Head of caudate nucleus (tissue), 42 donors: ENCODE measurements at regions of chr22 and their contacts with region 1.

Region 1: GRCh38 chr22:43014869-43015676 is at the start of gene PACSIN2:
- DNase-seq: peak; percentile 98 to 100 (median 100)

Region 2: DNA sequence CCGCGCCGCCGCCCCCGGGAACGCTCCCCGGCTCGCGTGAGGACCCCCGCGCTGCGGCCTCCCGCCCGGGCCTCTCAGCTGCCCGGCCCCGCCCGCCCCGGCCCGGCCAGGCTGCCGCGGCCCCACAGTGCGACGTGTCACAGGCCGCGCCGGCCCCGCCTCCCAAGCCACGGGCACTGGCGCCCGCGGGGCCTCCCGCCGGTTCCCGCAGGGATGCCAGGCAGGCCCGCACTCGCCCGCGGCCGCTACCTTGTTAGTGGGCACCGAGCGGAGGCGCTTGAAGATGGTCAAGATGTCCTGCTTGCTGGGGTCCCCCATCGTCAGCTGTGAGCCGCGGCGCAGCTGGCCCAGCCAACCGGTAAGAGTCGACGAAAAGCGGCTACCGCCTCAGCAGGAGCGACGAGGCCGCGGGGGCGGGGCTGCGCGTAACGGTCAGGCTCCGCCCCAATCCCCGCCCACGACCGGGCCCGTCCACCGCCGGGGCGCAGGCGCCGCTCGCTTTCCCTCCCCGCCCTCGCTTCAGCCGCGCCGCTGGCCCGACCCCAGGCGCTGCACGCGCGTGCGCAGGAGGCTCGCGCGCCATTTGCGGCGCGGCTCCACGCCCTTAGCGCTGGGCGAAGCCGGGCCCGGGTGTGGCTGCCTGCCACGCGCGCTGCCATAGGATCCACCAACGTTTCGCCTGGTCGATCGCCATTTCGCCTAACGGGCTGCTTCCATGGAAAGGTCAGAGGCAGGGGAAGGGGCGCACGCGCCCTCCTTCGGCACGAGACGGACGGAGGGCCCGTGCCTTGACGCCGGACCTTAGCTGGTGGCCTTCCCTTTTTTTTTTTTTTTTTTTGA is 158.0 kb before region 1 on chr22 and contains the start of gene ARFGAP3:
- intact Hi-C with region 1: loop called (anchors 2 kb)
- DNase-seq: peak; percentile 77 to 98 (median 95)

Region 3: GRCh38 chr22:43053176-43053575 is 38.1 kb after region 1 on chr22:
- intact Hi-C with region 1: no loop called
- DNase-seq: no peak

Region 4: DNA sequence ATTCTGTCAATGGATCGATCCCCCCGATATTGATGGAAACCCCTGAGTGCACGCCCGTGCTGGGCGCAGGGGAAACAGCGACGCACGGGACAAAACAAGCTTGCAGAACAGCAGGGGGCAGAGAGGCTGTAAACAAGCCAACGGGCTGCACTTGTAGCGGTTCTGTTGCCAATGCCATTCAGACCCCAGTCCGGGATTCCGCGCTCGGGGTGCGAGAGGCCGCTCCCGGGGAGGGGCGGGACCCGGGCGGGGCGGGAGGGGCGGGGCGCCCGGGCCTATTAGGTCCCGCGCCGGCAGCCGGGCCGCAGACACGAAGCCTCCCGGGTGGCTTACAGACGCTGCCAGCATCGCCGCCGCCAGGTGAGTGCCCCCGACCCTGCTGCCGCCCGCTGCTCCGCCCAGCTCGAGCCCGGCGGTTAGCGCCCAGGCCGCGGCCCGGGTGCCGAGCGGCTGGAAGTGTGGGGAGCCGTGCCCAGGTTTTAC is 95.4 kb after region 1 on chr22 and contains the start of gene BIK:
- intact Hi-C with region 1: no loop called
- DNase-seq: peak in 24 of 42 donors; percentile 12 to 65 (median 25)